Left ventricle myocardium inferior (tissue), 1 donor: ENCODE measurements at regions of chr3 and their contacts with region 1.

Region 1: DNA sequence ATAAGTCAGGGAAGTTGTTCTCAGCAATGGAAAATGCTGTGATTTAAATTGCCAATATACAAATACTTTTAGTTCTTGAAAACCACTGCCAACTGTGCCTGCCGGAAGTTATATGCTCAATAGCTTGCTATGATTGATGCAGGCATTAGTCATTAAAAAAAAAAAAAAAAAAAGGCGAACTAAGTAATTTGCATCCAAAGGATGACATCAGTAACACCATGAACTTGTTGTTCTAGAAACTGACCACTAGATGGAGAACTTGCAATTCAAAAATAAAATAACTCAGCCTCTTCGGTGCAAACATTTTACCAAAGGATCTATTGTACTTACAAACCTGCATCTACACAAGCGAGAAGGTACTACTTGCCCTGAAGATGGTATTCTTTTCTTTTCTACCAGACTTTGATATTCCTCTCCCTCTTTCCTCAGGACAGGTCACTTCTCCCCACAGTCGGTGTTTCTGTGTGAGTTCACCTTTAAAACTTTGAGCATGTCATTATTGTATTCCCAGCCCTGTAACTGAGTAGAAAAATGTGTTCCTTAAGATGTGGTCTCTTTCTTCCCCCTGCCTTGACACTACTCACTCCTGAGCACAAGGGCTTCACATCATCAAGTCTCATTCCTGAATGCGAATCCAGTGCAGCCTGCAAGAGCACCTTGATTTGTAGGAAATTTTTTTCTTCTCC is 115.0 kb upstream of the VEPH1 start:
- DNase-seq: no peak
- H3K4me3 ChIP-seq: no peak overlapping the region
- H3K27ac ChIP-seq: no peak overlapping the region
- H3K4me1 ChIP-seq: no peaks in the 10 kb centered on the region
- H3K27me3 ChIP-seq: peaks cover 14% of the 10 kb centered on the region
- CTCF ChIP-seq: peak; percentile 75

Region 2: GRCh38 chr3:157662171-157662570 is 44.0 kb after region 1 on chr3:
- intact Hi-C with region 1: no loop called
- DNase-seq: no peak
- H3K4me3 ChIP-seq: no peak overlapping the region
- H3K27ac ChIP-seq: no peak overlapping the region
- H3K4me1 ChIP-seq: no peaks in the 10 kb centered on the region
- H3K27me3 ChIP-seq: peaks cover 7% of the 10 kb centered on the region
- CTCF ChIP-seq: no peak

Region 3: DNA sequence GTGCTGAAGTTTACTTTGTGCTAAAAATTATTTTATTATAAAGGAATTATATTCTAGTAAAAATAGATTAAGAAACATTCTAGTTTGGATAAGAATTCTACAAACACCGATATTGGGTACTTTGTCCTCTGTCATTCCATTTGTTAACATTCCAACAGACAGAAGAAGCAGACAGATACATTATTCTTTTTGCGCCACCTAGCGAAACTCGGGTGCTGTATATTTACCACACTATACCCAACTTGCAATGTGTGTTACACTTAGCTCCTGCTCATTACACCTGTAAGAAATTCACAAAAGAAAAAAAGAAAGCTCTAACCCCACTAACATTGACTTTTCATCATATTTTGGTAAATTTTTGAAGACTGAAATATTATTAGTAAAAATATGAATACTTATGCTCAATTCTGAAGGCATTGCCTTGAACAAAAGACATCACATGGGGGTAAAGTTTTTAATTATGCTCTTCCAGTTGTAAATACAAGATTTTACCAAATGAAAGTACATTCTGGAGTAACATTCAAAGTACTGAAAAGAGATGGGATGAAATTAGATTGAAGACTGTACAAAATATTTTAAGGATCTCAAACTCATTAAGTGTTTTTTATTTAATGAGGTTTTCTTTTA is 816.3 kb after region 1 on chr3:
- intact Hi-C with region 1: loop called (anchors 2 kb)
- DNase-seq: no peak
- H3K4me3 ChIP-seq: no peak overlapping the region
- H3K27ac ChIP-seq: no peak overlapping the region
- H3K4me1 ChIP-seq: no peaks in the 10 kb centered on the region
- H3K27me3 ChIP-seq: no peaks in the 10 kb centered on the region
- CTCF ChIP-seq: peak; percentile 82

Region 4: DNA sequence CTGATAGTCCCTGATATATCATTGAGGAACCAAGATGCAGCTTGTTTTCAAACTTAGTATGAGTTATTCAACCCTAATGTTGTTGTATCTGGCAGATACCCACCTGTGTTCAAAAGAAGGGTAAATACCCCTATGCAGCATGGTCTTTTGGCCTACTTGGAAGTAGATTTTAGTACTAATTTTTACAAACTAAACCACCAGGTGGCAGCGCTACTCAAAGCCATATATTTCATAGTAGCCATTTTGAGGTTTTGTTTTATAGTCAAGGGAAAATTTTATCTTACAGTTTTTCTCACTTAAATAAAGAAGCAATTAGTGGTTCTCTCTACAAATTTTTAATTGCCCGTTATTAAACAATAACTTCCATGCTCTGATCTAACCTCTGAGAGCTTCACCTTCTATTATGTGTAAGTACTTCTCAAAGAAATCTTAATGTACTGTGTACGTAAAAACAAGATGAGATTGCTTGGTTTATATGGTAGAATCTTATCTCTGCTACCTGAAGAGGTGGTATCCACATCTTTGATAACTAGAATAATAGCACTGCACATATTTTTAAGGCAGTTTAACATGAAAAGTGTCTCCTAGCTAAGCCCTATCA is 921.3 kb after region 1 on chr3:
- intact Hi-C with region 1: loop called (anchors 10 kb)
- DNase-seq: no peak
- H3K4me3 ChIP-seq: no peak overlapping the region
- H3K27ac ChIP-seq: no peak overlapping the region
- H3K4me1 ChIP-seq: no peaks in the 10 kb centered on the region
- H3K27me3 ChIP-seq: no peaks in the 10 kb centered on the region
- CTCF ChIP-seq: peak; percentile 64